Activated CD4-positive, alpha-beta memory T cell treated with anti-CD3 and anti-CD28 coated beads for 36 hours (primary cell): ENCODE measurements at regions of chr1 and their contacts with region 1.

Region 1: DNA sequence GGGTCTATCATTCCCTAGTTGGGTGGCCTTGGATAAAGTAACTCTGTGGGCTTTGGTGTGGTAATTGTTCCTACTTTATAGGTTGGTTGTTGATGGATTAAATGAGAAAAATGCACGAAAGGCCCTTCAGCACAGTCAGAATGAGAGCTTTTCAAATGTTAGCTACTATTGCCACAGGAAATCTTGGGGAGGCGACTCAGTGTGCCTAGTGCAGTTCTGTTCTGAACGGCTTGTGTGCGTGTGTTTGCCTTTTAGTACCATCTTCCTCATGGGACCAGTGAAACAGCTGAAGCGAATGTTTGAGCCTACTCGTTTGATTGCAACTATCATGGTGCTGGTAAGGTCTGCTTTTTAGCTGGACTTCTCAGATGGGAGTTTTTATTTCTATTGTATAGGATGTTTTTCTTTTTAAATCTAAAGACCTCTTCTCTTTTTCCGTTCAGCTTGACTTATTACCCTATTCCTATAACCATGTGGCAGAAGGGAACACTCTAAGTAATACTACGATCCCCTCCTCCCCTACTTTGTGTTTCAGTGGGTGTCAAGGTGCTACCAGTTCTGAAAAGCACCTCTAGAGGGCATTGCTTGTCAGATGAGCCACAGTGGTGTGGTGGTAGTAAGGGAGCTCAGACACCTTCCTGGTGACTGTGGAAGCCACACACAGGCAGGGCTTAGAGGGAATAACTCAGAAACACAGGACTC is 9.2 kb downstream of the SFT2D2 start:
- DNase-seq: peak; percentile 63
- H3K4me3 Mint-ChIP-seq: no peak overlapping the region
- H3K27ac Mint-ChIP-seq: peak overlapping the region; percentile 79
- H3K4me1 Mint-ChIP-seq: peaks cover 61% of the 10 kb centered on the region
- H3K27me3 Mint-ChIP-seq: no peaks in the 10 kb centered on the region

Region 2: DNA sequence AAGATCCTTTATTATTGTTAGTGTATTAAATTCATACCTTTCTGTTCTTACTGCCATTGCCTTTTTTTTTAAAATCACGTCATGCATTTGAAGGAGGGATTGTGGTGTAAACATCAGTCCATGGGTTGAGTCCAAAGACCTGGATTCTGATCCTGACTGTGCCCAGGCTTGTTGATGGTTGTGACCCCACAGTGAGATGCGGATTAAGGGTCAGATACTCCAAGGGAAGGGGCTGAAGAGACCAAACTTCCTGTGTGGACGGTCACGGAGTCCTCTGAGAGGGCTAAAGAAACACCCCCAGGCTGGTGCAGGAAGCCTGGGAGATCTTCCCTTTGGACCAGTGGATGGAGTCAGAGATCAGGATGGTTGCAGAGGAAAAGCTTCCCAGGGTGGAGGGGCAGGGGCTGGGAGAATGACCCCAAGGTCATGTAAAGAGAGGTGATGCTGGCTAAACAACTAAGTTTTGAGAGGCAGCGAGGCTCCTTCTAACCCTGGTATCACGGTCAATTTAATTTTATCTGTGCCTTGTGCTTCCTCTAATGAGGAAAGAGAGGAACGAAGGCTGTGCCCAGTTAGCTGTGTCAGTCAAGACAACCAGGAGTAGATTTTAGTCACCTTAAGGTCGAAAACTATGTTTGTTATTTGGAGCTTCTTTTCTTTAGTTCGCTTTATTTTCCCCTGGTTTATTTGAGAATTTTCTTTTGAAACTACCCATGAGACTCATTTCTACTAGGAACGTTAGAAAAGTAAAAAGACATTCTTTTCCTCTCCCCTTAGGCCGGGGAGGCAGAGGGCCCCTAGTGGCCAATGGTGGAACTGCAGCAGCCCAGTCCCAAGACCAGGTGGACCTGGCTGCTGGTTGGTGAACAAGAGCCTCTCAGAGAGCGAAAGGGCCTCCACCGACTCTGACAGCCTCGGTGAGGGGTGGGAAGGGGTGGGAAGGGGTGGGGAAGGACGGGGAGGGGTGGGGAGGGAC is 89.5 kb before region 1 on chr1:
- CTCF ChIA-PET with region 1: no interaction called
- POLR2A ChIA-PET with region 1: no interaction called
- intact Hi-C with region 1: loop called (anchors 1 kb)
- DNase-seq: peak; percentile 91
- H3K4me3 Mint-ChIP-seq: no peak overlapping the region
- H3K27ac Mint-ChIP-seq: no peak overlapping the region
- H3K4me1 Mint-ChIP-seq: peaks cover 13% of the 10 kb centered on the region
- H3K27me3 Mint-ChIP-seq: no peaks in the 10 kb centered on the region

Region 3: DNA sequence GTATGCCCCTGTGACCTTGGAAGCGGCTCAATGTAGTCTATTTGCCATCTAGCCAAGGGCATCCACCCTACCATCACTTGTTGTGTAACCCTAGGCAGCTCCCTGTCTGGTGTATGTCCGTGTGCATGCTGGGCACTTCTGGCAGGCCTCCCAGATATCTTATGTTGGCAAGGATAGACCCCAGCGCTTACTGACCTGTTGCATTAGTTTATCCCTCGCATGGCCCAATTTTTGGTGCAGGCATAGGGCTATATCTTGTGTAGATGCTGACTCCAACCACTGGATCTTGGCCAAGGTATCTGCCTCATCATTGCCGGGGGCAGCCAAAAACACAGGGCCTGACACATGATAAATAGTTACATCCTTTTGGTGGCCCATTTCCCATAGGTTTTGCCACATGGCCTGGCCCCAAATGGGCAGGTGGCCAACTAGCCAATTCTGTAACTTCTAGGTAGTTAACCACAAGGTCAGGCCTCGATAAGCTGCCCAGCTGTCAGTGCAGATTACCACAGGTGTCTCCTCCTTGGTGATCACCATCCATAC is 31.7 kb after region 1 on chr1:
- CTCF ChIA-PET with region 1: no interaction called
- POLR2A ChIA-PET with region 1: no interaction called
- intact Hi-C with region 1: no loop called
- DNase-seq: no peak
- H3K4me3 Mint-ChIP-seq: no peak overlapping the region
- H3K27ac Mint-ChIP-seq: no peak overlapping the region
- H3K4me1 Mint-ChIP-seq: peaks cover under 1% of the 10 kb centered on the region
- H3K27me3 Mint-ChIP-seq: no peaks in the 10 kb centered on the region

Region 4: GRCh38 chr1:168287237-168287664 is 52.3 kb after region 1 on chr1:
- CTCF ChIA-PET with region 1: interaction called, 3 read pairs
- POLR2A ChIA-PET with region 1: no interaction called
- intact Hi-C with region 1: loop called (anchors 5 kb)
- DNase-seq: no peak
- H3K4me3 Mint-ChIP-seq: no peak overlapping the region
- H3K27ac Mint-ChIP-seq: no peak overlapping the region
- H3K4me1 Mint-ChIP-seq: peaks cover 16% of the 10 kb centered on the region
- H3K27me3 Mint-ChIP-seq: no peaks in the 10 kb centered on the region

Region 5: GRCh38 chr1:168360151-168361021 is 125.4 kb after region 1 on chr1:
- CTCF ChIA-PET with region 1: interaction called, 3 read pairs
- POLR2A ChIA-PET with region 1: no interaction called
- intact Hi-C with region 1: loop called (anchors 1 kb)
- DNase-seq: peak; percentile 73
- H3K4me3 Mint-ChIP-seq: no peak overlapping the region
- H3K27ac Mint-ChIP-seq: peak overlapping the region; percentile 39
- H3K4me1 Mint-ChIP-seq: peaks cover 38% of the 10 kb centered on the region
- H3K27me3 Mint-ChIP-seq: no peaks in the 10 kb centered on the region

Region 6: DNA sequence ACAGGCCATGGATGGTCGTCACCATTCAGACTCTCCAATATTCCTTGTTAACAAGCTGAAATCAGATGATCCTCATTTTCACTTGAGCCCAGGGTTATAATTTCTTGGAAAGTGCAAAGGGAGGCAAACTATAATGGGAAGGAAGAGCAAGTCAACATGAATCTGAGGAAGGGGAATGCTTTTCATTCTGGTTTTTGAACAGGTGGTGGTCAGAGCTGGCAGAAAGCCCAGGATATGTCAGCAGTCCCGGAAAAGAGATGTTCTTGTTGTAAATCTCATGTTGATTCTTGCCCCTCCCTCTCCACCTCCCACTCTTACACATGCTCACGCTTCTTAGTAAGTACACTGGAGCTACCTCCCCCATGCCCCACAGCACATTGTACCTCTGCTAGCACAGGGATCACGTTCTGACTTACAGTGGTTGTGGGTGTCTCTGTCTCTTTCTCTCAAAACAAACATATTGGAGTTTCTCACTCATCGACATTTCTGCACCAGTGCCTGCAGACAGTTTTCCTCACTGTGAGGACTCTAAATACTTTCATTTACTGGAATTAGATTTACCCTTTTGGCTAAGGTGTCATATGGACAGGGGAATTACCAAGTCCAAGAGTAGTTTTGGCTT is 231.2 kb after region 1 on chr1:
- CTCF ChIA-PET with region 1: interaction called, 3 read pairs
- POLR2A ChIA-PET with region 1: no interaction called
- intact Hi-C with region 1: loop called (anchors 5 kb)
- DNase-seq: peak; percentile 81
- H3K4me3 Mint-ChIP-seq: no peak overlapping the region
- H3K27ac Mint-ChIP-seq: peak overlapping the region; percentile 75
- H3K4me1 Mint-ChIP-seq: peaks cover 58% of the 10 kb centered on the region
- H3K27me3 Mint-ChIP-seq: no peaks in the 10 kb centered on the region